ENCODE measurements at regions of chr6 and their contacts with region 1.

Region 1: DNA sequence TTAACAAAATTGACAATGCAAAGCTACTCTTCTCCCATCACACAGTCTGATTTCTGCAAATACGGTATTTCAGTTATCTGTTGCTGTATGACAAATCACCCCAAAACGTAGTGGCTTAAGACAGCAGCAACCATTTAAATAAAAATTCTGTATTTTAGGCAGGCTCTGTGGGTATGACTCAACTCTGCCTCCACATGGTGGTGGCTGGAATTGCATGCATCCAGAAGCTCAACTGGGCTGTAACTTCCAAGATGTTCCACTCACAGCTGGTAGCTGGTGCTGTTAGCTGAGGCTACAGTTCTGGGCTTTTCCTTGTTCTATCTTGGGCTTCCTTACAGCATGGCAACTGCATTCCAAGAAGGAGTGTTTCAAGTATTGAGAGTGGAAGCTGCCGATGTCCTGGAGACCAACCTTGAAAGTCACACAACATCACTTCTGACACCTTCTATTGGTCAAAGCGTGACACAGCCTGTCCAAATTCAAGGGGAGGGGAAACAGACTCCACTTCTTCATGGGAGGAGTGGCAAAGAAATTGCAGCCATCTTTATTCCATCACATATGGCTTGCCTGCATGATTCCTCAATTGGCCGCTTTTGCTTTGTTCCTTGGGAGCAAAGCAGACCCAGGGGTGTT is 39.7 kb upstream of the TULP1 start:
- DNase-seq: peak; percentile 44
- H3K4me3 ChIP-seq: no peak overlapping the region
- H3K27ac ChIP-seq: no peak overlapping the region
- H3K4me1 ChIP-seq: no peaks in the 10 kb centered on the region
- H3K27me3 ChIP-seq: peaks cover 4 to 7% of the 10 kb centered on the region in 2 experiments
- CTCF ChIP-seq: peak; percentile 80 to 90
- POLR2A ChIP-seq: no peak

Region 2: DNA sequence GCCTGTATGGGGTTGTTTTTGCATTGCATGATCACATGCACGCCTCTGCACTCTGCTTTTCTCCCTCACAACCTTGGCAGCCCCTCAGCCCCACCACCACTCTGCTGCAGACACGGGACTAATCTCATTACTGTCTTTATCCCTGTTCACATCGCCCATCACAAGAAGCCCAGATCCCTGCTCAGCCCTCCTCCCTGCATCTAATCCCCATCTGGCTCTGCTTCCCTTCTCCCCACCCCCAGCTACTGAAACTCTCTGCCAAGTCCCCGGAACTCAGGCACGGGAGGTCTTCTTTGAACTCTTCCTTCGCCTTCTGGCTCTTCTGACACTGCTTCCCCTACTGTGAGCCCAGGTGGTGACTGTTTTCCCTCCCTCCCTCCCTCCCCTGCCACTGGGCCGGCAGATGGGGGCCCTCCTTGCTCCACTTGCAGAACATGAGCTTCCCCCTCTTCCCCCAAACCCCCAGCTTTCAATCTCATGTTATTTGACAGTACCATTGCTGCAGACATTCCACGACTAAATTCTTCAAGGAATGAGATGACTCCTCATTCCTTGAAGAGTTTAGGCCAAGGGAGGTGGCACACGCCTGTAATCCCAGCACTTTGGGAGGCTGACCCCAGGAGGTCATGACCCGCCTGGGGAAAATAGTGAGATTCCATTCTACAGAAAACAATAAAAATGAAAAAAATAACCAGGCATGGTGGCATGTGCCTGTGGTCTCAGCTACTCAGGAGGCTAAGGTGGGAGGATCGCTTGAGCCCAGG is 17.8 kb before region 1 on chr6:
- CTCF ChIA-PET with region 1: interaction called, 31 read pairs
- POLR2A ChIA-PET with region 1: no interaction called
- dilution Hi-C with region 1: no loop called
- intact Hi-C with region 1: no loop called
- DNase-seq: no peak
- H3K4me3 ChIP-seq: no peak overlapping the region
- H3K27ac ChIP-seq: no peak overlapping the region
- H3K4me1 ChIP-seq: no peaks in the 10 kb centered on the region
- H3K27me3 ChIP-seq: peaks cover 2 to 12% of the 10 kb centered on the region in 2 experiments
- CTCF ChIP-seq: no peak
- POLR2A ChIP-seq: no peak

Measured in endothelial cell of umbilical vein (primary cell).